Left colon (tissue), 2 donors: ENCODE measurements at regions of chr2 and their contacts with region 1.

Region 1: DNA sequence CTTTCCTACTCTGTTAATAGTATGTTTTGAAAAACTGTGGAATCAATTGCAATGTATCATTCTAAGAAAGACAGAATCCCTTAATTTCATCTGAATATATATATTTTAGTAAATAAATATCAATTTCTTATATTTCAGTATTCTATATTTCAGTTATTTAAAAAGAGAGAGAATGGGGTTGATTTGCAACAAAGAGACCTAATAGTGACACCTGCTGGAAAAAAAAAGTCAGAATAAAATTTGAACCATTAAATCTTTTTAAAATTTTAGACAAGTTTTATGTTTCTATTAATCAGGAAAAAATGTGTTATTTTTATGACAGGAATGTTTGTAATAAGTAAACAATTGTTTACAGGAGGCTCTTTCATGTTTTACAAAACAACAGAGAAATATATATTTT is 20.7 kb upstream of the CCNT2 start:
- DNase-seq: no peak
- ATAC-seq: no peak

Region 2: DNA sequence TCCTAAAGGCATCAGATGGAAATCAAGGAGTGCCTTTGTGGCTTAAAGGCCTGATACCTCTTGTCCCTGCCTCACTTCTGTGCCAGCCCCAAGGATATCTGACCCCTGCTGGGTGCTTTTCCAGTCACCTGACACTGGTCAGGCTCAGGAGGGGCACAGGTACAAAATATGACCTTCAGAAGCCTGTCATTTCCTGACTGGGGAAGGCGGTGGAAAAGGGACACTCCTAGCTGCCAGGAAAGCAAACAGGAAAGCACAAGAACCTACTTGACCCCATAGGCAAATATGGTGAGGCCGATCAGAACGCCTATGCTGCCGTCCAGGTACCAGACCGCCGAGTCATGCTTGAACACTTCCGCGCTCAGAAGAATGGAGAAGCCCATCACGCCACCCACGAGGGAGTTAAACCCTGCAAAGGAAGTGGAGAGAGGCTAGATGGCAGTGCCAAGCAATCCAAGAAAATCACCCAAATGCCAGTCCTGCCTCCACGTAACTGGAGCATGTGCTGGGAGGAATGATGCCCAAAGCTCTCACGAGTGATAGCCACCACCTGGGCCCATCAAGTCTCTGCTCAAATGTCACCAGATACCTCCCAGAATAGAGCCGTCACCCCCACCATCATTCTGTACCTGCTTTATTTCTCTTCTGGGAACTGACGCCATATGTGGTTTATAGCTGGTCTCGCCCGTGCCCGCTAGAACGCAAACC is 440.0 kb before region 1 on chr2:
- intact Hi-C with region 1: loop called in 1 of 2 experiments (anchors 10 kb)
- DNase-seq: no peak
- ATAC-seq: peak; percentile 19

Region 3: DNA sequence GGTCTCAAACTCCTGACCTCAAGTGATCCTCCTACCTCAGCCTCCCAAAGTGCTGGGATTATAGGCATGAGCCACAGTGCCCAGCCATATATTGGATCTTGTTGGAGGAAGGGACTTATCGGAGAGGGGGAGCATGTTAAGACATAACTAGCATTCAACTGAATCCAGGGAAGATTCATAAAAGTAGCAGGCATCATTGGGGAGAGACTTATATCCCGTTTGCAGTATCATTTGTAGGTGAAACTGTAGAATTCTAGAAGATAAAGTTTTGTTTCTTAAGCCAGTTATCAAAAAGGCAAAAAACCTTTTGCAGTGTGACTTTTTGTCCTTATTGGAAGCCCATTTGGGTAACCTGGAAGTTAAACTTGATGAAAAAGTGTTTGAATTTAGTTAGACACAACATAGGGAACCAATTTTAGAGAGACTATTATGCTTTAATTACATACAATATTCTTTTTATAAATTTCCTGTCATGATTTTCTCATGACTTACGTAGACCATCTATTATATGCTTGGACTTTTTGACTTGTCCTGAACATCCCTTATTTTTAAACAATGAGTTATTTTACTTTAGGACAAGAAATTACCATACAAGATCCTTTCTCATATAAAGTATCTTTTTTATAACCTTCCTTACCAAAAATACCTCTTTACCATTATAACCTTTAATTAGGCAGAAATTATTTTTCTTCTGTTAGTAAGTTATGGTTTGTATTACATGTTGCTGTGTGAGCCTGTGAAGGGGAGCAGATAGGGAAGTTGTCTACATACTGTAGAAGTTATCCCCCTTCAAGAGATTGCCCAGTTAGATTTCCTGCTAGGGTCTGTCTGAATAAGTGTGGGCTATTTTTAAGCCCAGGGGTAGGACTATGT is 174.4 kb after region 1 on chr2:
- intact Hi-C with region 1: no loop called
- DNase-seq: no peak
- ATAC-seq: no peak